ENCODE measurements at regions of chr11 and their contacts with region 1.

Region 1: GRCh38 chr11:7690648-7691047 is 15.6 kb downstream of the OVCH2 start:
- DNase-seq: no peak
- H3K4me3 ChIP-seq: no peak overlapping the region
- H3K27ac ChIP-seq: no peak overlapping the region
- H3K4me1 ChIP-seq: no peaks in the 10 kb centered on the region
- H3K27me3 ChIP-seq: peaks cover 0 to 12% (median 5%) of the 10 kb centered on the region in 3 donors
- CTCF ChIP-seq: no peak
- EP300 ChIP-seq: no peak
- POLR2A ChIP-seq: no peak

Region 2: GRCh38 chr11:7098235-7098832 is 592.3 kb before region 1 on chr11:
- intact Hi-C with region 1: loop called (anchors 10 kb)
- DNase-seq: no peak
- H3K4me3 ChIP-seq: no peak overlapping the region
- H3K27ac ChIP-seq: no peak overlapping the region
- H3K4me1 ChIP-seq: no peaks in the 10 kb centered on the region
- H3K27me3 ChIP-seq: no peaks in the 10 kb centered on the region
- CTCF ChIP-seq: peak in 3 of 4 experiments; percentile 37 to 61 (median 38)
- EP300 ChIP-seq: no peak
- POLR2A ChIP-seq: no peak

Region 3: DNA sequence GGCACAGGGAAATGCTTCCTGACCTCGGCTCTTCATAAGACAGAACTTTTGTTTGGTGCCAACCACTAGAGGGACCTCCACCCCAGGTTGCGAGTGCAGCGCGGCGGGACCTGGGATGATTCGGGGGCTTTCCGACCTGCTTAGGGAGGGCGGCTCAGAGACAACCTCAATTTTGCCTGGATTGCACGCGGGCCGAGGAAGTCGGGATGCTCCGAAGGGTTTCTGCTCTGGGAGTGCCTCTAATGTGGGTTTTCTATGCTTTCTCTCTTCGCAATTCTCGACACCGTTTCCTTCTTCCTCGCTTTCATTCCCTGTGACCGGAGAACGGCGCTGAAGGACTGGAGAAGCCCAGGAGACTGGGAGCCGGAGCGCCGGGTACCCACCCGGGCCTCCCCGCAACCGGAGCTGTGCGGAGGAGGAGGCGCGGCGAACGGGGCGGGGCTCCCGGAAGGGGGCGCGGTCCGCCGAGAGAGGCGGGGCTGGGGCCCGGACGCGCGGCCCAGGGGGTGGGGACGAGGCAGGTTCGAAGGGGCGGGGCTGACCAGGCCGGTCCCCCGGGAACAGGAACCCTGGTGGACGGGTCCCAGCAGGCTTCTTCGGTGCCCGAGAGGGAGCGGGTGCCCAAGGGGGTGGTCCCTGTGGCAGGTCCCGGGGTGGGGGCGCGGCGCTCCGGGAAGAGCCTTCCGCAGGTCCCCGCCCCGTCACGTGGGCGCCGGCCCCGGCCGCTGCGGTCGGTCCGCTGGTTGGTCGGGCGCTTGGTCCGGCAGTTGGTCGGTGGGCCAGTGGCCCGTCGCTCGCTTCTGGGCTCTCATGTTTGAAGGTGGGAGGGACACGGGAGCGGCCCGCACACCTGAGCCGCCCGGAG is 177.2 kb before region 1 on chr11 and contains the start of gene PPFIBP2:
- intact Hi-C with region 1: loop called (anchors 2 kb)
- DNase-seq: peak; percentile 89
- H3K4me3 ChIP-seq: peak within 1 kb of the TSS; percentile 53 to 81 (median 74)
- H3K27ac ChIP-seq: peak within 1 kb of the TSS; percentile 79 to 89 (median 84)
- H3K4me1 ChIP-seq: peaks cover 0 to 29% (median 21%) of the 10 kb centered on the region in 4 donors
- H3K27me3 ChIP-seq: no peaks in the 10 kb centered on the region
- CTCF ChIP-seq: peak; percentile 12 to 64 (median 56)
- EP300 ChIP-seq: no peak
- POLR2A ChIP-seq: peak; percentile 33 to 40
- total RNA-seq, gene PPFIBP2: 4.1 to 11.6 (median 9.2) TPM

Region 4: DNA sequence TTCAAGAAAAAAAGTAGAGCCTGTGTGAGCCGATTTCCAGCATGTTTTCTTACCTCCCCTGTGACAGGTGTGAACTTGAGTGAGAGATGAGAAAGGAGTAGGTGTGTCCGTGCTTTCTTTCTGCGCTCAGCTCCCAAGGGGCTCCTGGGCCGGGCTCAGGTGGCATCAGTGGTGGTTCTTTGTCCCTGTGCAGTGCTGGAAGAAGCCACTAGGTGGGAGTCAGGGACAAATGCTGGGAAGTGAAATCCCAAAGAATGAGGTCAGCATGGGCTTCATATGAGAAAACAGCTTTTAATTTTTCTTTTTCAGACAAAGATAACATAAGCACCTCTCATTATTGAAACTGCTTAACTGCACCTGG is 119.0 kb before region 1 on chr11:
- intact Hi-C with region 1: loop called (anchors 2 kb)
- DNase-seq: peak; percentile 73
- H3K4me3 ChIP-seq: no peak overlapping the region
- H3K27ac ChIP-seq: peak overlapping the region in 2 of 4 donors; percentile 12 to 35
- H3K4me1 ChIP-seq: peaks cover 0 to 19% (median 15%) of the 10 kb centered on the region in 4 donors
- H3K27me3 ChIP-seq: peaks cover 0 to 2% (median 0%) of the 10 kb centered on the region in 3 donors
- CTCF ChIP-seq: peak; percentile 65 to 91 (median 88)
- EP300 ChIP-seq: no peak
- POLR2A ChIP-seq: no peak

Measured in sigmoid colon (tissue), 7 donors.